MCF 10A (cell line): ENCODE measurements at regions of chr6 and their contacts with region 1.

Region 1: DNA sequence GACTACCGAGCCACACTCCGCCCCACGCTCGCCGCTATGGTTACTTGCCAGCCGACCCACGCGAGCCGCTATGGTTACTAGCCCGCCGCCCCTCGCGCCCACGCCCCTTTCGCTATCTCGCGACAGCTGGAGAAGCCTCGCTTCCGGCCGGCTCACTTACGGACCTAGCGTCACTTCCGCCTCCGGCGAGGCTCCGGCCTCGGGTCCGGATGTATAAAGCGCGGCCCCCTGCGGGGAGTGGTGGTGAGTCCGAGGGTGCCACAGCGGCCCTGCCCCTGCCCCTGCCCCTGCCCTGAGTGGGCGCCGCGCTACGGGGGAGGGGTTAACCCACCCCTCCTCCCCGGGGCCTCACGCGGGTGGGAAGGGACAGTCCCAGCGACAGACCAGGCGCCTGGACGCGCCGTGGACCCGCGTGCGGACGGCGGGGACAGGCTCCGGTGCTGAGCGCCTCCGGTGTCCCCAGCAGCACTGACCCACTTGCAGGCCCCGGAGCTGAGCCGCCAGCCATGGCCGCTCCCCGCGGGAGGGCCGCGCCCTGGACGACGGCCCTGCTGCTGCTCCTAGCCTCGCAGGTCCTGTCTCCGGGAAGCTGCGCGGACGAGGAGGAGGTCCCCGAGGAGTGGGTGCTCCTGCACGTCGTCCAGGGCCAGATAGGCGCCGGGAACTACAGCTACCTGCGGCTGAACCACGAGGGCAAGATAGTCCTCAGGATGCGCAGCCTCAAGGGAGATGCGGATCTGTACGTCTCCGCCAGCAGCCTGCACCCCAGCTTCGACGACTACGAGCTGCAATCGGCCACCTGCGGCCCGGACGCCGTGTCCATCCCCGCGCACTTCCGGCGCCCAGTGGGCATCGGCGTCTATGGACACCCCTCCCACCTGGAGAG is at the starts of genes C6orf120 and WDR27:
- DNase-seq: peak; percentile 96
- H3K4me3 Mint-ChIP-seq: peak within 1 kb of the TSS; percentile 86
- H3K27ac Mint-ChIP-seq: peak within 1 kb of the TSS; percentile 46
- H3K4me1 Mint-ChIP-seq: peaks cover 42% of the 10 kb centered on the region
- H3K27me3 Mint-ChIP-seq: no peaks in the 10 kb centered on the region
- CTCF ChIP-seq: no peak
- total RNA-seq, gene C6orf120: 25.3 and 26.3 TPM in 2 replicates
- total RNA-seq, gene WDR27: 65.4 and 80.6 TPM in 2 replicates

Region 2: GRCh38 chr6:169654598-169655391 is 47.4 kb before region 1 on chr6:
- CTCF ChIA-PET with region 1: no interaction called
- POLR2A ChIA-PET with region 1: interaction called, 6 read pairs
- intact Hi-C with region 1: loop called (anchors 1 kb)
- DNase-seq: peak; percentile 74
- H3K4me3 Mint-ChIP-seq: peak overlapping the region; percentile 88
- H3K27ac Mint-ChIP-seq: peak overlapping the region; percentile 8
- H3K4me1 Mint-ChIP-seq: no peaks in the 10 kb centered on the region
- H3K27me3 Mint-ChIP-seq: no peaks in the 10 kb centered on the region
- CTCF ChIP-seq: no peak

Region 3: GRCh38 chr6:169689247-169689646 is 12.9 kb before region 1 on chr6:
- CTCF ChIA-PET with region 1: no interaction called
- POLR2A ChIA-PET with region 1: interaction called, 145 read pairs
- intact Hi-C with region 1: loop called (anchors 1 kb)
- DNase-seq: peak; percentile 95
- H3K4me3 Mint-ChIP-seq: peak overlapping the region; percentile 68
- H3K27ac Mint-ChIP-seq: peak overlapping the region; percentile 87
- H3K4me1 Mint-ChIP-seq: peaks cover 51% of the 10 kb centered on the region
- H3K27me3 Mint-ChIP-seq: no peaks in the 10 kb centered on the region
- CTCF ChIP-seq: no peak

Region 4: DNA sequence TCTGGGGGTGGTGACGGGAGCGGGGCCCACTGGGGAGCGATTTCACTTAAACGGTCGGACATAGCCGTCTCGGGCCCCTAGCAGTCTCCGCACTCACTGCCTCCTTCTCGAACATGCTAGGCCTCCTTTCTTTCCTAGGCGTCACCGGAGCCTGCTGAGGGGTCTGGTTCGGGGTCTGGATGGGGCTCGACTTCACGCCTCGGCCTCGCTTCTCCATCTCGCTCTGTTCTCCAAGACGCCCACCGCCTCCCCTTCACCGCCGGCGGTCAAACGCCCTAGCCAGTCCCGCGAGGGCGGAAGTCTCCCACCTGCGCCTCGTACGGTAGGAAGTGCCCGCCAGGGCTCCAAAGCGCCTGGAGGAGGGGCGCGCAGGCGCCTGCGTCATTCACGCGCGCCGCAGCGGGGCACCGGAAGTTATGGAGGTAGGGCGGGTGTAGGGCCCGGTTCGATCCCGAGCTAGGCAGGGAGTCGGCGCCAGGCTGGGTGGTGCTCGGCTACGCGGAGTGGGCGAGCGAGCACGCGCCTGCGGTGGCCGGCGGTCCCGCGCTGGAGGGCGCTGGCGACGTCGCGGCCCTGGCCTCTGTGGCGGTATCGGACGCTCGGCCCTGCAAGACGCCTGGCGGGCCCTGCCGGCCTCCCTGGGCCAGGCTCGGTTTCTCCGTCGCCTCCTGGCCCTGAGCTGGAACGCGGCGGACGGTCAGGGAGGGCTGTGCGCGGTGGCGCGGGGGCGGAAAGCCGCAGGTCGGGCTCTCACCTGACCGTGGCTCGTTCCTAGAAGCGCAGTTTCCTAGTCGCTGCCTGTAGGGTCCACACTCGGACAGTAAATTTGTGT is 49.3 kb after region 1 on chr6 and contains the starts of genes DYNLT2 and ERMARD:
- CTCF ChIA-PET with region 1: no interaction called
- POLR2A ChIA-PET with region 1: interaction called, 59 read pairs
- intact Hi-C with region 1: no loop called
- DNase-seq: peak; percentile 92
- H3K4me3 Mint-ChIP-seq: peak within 1 kb of the TSS; percentile 100
- H3K27ac Mint-ChIP-seq: peak within 1 kb of the TSS; percentile 100
- H3K4me1 Mint-ChIP-seq: peaks cover 17% of the 10 kb centered on the region
- H3K27me3 Mint-ChIP-seq: no peaks in the 10 kb centered on the region
- CTCF ChIP-seq: no peak
- total RNA-seq, gene DYNLT2: 0.79 and 1.3 TPM in 2 replicates
- total RNA-seq, gene ERMARD: 42.8 and 51.7 TPM in 2 replicates

Region 5: DNA sequence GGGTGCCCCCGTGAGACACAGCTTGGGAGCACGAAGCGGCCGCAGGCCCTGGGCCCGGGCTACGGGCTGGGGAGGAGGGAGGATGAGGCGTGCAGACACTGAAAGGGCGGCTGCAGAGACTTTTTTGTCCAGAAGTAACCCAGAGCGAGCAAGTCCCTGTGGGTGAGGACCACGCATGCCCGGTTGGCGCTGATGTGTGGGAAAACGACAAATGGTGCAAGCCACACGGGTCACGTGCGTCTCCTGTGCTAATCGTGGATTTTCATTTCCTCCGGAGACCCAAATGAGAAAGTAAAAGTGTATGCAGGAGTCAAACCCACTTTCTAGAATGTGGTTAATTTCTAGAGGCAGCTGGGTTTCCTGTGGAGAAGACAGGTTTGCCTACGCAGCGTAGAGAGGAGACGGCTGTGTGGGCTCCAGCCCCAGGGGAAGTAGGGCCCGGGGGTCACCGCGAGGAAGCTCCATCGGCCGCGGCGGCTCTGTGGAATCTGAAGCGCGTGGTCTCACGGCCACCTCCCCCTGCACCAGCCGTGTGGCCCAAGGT is 569.6 kb after region 1 on chr6:
- CTCF ChIA-PET with region 1: no interaction called
- POLR2A ChIA-PET with region 1: no interaction called
- intact Hi-C with region 1: no loop called
- DNase-seq: no peak
- H3K4me3 Mint-ChIP-seq: no peak overlapping the region
- H3K27ac Mint-ChIP-seq: no peak overlapping the region
- H3K4me1 Mint-ChIP-seq: no peaks in the 10 kb centered on the region
- H3K27me3 Mint-ChIP-seq: peaks cover 26% of the 10 kb centered on the region
- CTCF ChIP-seq: no peak